ENCODE measurements at regions of chr7 and their contacts with region 1.

Region 1: GRCh38 chr7:41940760-41941343 is 238.0 kb upstream of the INHBA start:
- DNase-seq: peak; percentile 88
- H3K4me3 ChIP-seq: no peak overlapping the region
- H3K27ac ChIP-seq: no peak overlapping the region
- H3K4me1 ChIP-seq: peaks cover 12% of the 10 kb centered on the region
- H3K27me3 ChIP-seq: no peaks in the 10 kb centered on the region
- CTCF ChIP-seq: peak; percentile 89

Region 2: DNA sequence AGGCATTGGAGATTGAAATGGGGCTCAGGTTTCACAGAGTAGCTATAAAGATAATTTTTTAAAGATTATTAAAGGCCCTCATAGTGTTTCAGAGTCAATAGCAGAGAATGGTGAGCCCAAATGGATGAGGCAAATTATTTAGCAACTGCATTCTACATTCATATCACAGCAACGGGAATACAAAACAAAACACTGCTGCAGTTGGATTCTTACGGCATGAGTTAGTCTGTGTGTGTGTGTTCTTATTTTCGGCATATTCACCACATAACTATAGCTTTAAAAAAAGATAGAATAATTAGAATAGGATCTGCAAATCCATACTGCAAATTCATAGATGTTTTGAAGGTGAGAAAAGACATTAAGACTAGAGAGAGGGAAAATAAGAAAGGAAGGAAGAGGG is 1740.1 kb before region 1 on chr7:
- CTCF ChIA-PET with region 1: no interaction called
- POLR2A ChIA-PET with region 1: no interaction called
- intact Hi-C with region 1: no loop called
- DNase-seq: no peak
- H3K4me3 ChIP-seq: no peak overlapping the region
- H3K27ac ChIP-seq: no peak overlapping the region
- H3K4me1 ChIP-seq: no peaks in the 10 kb centered on the region
- H3K27me3 ChIP-seq: no peaks in the 10 kb centered on the region
- CTCF ChIP-seq: no peak

Region 3: DNA sequence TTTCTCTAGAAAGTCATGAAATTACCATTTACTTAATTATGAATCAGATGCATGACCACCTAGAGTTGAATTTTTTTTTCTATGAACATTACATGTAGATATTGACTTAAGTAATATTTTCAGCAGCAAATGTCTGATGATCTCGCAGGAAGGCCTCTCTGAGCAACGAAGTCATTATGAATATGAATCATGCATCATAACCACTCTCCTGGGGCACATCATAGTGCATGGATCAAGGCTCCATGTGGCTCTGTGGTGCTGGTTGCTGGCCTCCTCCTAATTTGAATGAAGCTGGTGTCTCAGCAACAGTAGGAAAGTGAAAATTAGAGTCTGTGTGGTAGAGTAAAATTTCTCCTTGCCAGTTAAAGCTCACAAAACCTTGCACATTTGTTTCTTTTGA is 116.6 kb before region 1 on chr7:
- CTCF ChIA-PET with region 1: no interaction called
- POLR2A ChIA-PET with region 1: no interaction called
- intact Hi-C with region 1: loop called (anchors 2 kb)
- DNase-seq: peak; percentile 48
- H3K4me3 ChIP-seq: no peak overlapping the region
- H3K27ac ChIP-seq: peak overlapping the region; percentile 97
- H3K4me1 ChIP-seq: peaks cover 59% of the 10 kb centered on the region
- H3K27me3 ChIP-seq: no peaks in the 10 kb centered on the region
- CTCF ChIP-seq: no peak

Region 4: DNA sequence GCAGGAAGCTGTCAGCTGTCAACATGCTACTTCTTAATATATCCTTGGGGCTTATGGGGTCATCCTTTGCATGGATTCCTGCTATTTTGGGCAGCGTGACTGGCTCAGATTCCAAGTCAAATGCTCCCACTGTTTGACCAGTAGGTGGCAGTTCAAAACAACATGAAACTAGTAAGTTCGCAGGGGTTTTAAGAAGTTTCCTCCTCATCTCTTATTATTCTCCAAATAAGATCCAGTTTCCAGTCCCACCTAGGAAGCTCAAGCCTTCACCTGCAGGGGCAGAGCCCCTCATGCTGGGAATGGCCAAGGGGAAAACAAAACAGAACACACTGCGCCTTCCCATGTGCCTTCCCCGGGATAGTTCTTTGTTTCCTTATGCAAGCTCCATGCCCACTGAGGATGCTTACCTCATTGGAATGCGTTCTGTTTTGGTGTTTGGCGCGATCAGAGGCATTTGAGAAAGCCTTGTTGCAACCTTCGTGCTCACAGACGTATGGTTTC is 36.3 kb after region 1 on chr7:
- CTCF ChIA-PET with region 1: interaction called, 6 read pairs
- POLR2A ChIA-PET with region 1: no interaction called
- intact Hi-C with region 1: loop called (anchors 2 kb)
- DNase-seq: peak; percentile 73
- H3K4me3 ChIP-seq: no peak overlapping the region
- H3K27ac ChIP-seq: no peak overlapping the region
- H3K4me1 ChIP-seq: peaks cover 52% of the 10 kb centered on the region
- H3K27me3 ChIP-seq: no peaks in the 10 kb centered on the region
- CTCF ChIP-seq: peak; percentile 80

Region 5: GRCh38 chr7:42690794-42691639 is 750.2 kb after region 1 on chr7:
- CTCF ChIA-PET with region 1: interaction called, 7 read pairs
- POLR2A ChIA-PET with region 1: no interaction called
- intact Hi-C with region 1: loop called (anchors 2 kb)
- DNase-seq: peak; percentile 58
- H3K4me3 ChIP-seq: no peak overlapping the region
- H3K27ac ChIP-seq: no peak overlapping the region
- H3K4me1 ChIP-seq: peaks cover 9% of the 10 kb centered on the region
- H3K27me3 ChIP-seq: no peaks in the 10 kb centered on the region
- CTCF ChIP-seq: peak; percentile 47

Region 6: GRCh38 chr7:42843205-42843800 is 902.5 kb after region 1 on chr7:
- CTCF ChIA-PET with region 1: interaction called, 19 read pairs
- POLR2A ChIA-PET with region 1: no interaction called
- intact Hi-C with region 1: loop called (anchors 2 kb)
- DNase-seq: peak; percentile 83
- H3K4me3 ChIP-seq: peak overlapping the region; percentile 23
- H3K27ac ChIP-seq: no peak overlapping the region
- H3K4me1 ChIP-seq: no peaks in the 10 kb centered on the region
- H3K27me3 ChIP-seq: peaks cover 7% of the 10 kb centered on the region
- CTCF ChIP-seq: peak; percentile 80

Region 7: DNA sequence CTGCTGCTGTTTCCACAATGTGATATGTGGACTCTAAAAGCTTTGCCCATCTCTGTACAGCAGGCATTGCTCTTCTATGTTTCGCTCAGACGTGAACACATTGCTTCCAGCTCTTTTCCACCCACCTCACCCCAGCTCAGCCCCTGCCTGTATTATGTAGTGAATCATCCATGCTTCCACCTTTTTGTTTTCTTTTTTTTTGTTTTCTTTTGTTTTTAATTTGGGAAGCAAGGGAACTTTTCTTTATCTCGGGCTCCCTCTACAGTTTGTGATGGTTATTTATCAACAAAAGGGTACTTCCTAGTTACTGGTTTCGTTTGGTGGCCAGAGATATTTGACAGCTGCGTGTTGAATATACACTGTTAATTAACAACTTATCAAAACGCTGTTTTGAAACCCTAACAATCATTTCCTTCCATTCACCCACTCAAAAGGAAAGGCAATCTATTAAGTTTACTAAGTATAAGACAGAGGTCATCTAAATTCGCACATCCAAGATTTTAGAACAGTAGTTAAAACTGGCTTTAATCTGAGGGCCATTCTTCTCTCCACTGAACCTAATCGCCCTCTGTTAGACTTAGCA is 1514.2 kb after region 1 on chr7:
- CTCF ChIA-PET with region 1: no interaction called
- POLR2A ChIA-PET with region 1: no interaction called
- intact Hi-C with region 1: loop called (anchors 10 kb)
- DNase-seq: peak; percentile 62
- H3K4me3 ChIP-seq: no peak overlapping the region
- H3K27ac ChIP-seq: no peak overlapping the region
- H3K4me1 ChIP-seq: no peaks in the 10 kb centered on the region
- H3K27me3 ChIP-seq: no peaks in the 10 kb centered on the region
- CTCF ChIP-seq: peak; percentile 73